Activated B cell treated with CpG ODN at 0.5 μM for 24 hours (primary cell): ENCODE measurements at regions of chr6 and their contacts with region 1.

Region 1: GRCh38 chr6:149499066-149499465 is 14.3 kb upstream of the ZC3H12D start:
- DNase-seq: no peak
- ATAC-seq: no peak
- H3K4me3 Mint-ChIP-seq: no peak overlapping the region
- H3K27ac Mint-ChIP-seq: peak overlapping the region; percentile 87
- H3K4me1 Mint-ChIP-seq: peaks cover 61% of the 10 kb centered on the region
- H3K27me3 Mint-ChIP-seq: no peaks in the 10 kb centered on the region
- CTCF ChIP-seq: no peak

Region 2: GRCh38 chr6:148898376-148899014 is 600.6 kb before region 1 on chr6:
- CTCF ChIA-PET with region 1: no interaction called
- POLR2A ChIA-PET with region 1: interaction called, 11 read pairs
- intact Hi-C with region 1: no loop called
- DNase-seq: no peak
- ATAC-seq: no peak
- H3K4me3 Mint-ChIP-seq: no peak overlapping the region
- H3K27ac Mint-ChIP-seq: no peak overlapping the region
- H3K4me1 Mint-ChIP-seq: no peaks in the 10 kb centered on the region
- H3K27me3 Mint-ChIP-seq: no peaks in the 10 kb centered on the region
- CTCF ChIP-seq: no peak

Region 3: GRCh38 chr6:149409617-149410016 is 89.4 kb before region 1 on chr6:
- CTCF ChIA-PET with region 1: no interaction called
- POLR2A ChIA-PET with region 1: interaction called, 14 read pairs
- intact Hi-C with region 1: no loop called
- DNase-seq: no peak
- ATAC-seq: no peak
- H3K4me3 Mint-ChIP-seq: no peak overlapping the region
- H3K27ac Mint-ChIP-seq: no peak overlapping the region
- H3K4me1 Mint-ChIP-seq: peaks cover 12% of the 10 kb centered on the region
- H3K27me3 Mint-ChIP-seq: no peaks in the 10 kb centered on the region
- CTCF ChIP-seq: no peak

Region 4: GRCh38 chr6:149468179-149468578 is 30.9 kb before region 1 on chr6:
- CTCF ChIA-PET with region 1: interaction called, 3 read pairs
- POLR2A ChIA-PET with region 1: interaction called, 53 read pairs
- intact Hi-C with region 1: loop called (anchors 1 kb)
- DNase-seq: peak; percentile 37
- ATAC-seq: peak; percentile 48
- H3K4me3 Mint-ChIP-seq: peak overlapping the region; percentile 83
- H3K27ac Mint-ChIP-seq: peak overlapping the region; percentile 95
- H3K4me1 Mint-ChIP-seq: peaks cover 95% of the 10 kb centered on the region
- H3K27me3 Mint-ChIP-seq: no peaks in the 10 kb centered on the region
- CTCF ChIP-seq: no peak

Region 5: DNA sequence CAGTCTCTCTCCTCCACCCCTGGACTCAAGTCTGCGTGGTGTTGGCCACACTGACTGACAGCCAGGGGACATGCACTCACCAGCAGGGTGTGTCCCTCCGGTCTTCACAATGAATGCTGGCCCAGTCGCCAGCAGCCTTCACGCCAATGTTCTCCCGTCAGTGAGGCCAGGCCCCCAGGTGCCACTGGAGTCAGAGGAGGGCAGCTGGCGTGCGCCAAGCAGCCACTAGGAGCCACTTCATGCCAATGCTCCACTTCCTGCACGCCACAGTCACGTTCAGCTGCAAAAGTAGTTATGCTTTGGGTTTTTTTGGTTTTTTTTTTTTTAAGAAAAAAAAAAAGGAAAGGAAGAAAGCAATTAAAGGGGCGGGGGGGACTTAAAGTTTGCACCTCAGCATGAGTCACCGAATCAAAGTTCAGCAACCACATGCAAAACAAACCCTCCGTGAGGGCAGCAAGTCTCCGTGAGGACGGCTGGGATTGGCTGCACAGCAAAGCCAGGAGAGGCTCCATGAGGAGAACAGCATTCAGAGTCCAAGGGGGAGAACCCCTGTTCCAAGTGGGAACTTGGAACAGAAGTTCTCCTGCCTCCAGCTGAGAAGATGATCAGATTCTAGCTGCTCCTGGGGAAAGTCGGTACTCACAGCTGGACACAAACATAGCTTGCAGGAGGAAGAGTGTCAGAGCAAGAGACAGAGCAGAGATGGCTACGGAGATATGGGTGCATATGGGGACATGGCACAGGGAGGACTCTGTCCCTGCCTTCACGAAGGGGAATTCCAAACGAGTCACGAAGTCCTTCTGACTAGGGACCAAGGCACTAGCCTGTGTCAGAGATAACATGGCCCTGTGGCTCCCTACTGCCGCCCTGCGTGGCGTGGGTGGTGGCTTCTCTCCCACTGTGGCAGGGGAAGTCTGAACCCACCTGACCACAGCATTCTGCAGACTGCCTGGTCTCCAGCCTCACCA is 14.0 kb before region 1 on chr6 and contains the start of gene ZC3H12D:
- CTCF ChIA-PET with region 1: interaction called, 3 read pairs
- POLR2A ChIA-PET with region 1: interaction called, 14 read pairs
- intact Hi-C with region 1: loop called (anchors 1 kb)
- DNase-seq: peak; percentile 75
- ATAC-seq: peak; percentile 47
- H3K4me3 Mint-ChIP-seq: peak within 1 kb of the TSS; percentile 97
- H3K27ac Mint-ChIP-seq: peak within 1 kb of the TSS; percentile 99
- H3K4me1 Mint-ChIP-seq: peaks cover 87% of the 10 kb centered on the region
- H3K27me3 Mint-ChIP-seq: no peaks in the 10 kb centered on the region
- CTCF ChIP-seq: no peak
- total RNA-seq, gene ZC3H12D: 184 and 225 TPM in 2 replicates

Region 6: DNA sequence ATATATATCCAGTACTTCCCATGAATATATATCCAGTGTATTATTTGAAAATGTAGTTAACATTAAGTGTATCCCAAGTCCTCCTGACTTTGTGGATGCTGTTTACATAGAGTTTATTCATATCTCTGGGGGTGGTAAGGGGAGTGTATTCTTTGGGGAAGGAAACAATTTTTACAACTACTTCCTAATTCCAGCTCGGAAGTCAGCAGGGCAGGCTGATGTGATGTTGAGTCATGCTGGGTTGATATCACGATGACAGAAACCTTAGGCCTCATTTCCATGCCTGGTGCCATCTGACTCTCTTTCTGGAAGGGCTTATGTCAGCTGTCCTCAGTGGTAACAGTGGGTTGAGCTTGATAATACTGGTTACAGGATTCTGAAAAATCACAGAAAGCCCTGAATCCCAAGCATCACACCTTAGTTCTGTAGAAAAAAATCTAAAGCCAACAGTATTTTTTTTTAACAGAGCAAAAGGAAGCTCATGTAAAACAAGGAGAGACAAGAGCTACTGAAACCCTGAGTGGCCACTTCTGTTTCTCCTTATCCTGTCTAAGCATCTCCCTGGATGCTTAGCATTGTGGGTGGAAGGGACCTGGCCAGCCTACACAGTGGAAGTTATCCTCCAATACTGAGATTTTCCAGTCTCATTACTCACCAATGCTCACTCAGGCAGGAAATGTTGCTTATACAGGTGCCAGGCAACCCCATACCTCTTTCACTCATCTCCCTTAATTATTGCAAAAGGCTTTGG is 794.5 kb after region 1 on chr6:
- CTCF ChIA-PET with region 1: no interaction called
- POLR2A ChIA-PET with region 1: no interaction called
- intact Hi-C with region 1: no loop called
- DNase-seq: no peak
- ATAC-seq: no peak
- H3K4me3 Mint-ChIP-seq: no peak overlapping the region
- H3K27ac Mint-ChIP-seq: no peak overlapping the region
- H3K4me1 Mint-ChIP-seq: no peaks in the 10 kb centered on the region
- H3K27me3 Mint-ChIP-seq: peaks cover 11% of the 10 kb centered on the region
- CTCF ChIP-seq: no peak